SK-N-SH (cell line): ENCODE measurements at regions of chr1 and their contacts with region 1.

Region 1: GRCh38 chr1:30085811-30086770 is 637.3 kb downstream of the MATN1 start:
- DNase-seq: peak; percentile 93
- H3K4me3 ChIP-seq: peak overlapping the region; percentile 39 to 58
- H3K27ac ChIP-seq: peak overlapping the region in 1 of 2 experiments; percentile 31; a peak in 1 of 4 replicates
- H3K4me1 ChIP-seq: peaks cover 35 to 46% of the 10 kb centered on the region in 2 experiments; a peak in 3 of 4 replicates
- H3K27me3 ChIP-seq: no peaks in the 10 kb centered on the region
- CTCF ChIP-seq: peak; percentile 87
- EP300 ChIP-seq: no peak
- RAD21 ChIP-seq: peak; percentile 77

Region 2: DNA sequence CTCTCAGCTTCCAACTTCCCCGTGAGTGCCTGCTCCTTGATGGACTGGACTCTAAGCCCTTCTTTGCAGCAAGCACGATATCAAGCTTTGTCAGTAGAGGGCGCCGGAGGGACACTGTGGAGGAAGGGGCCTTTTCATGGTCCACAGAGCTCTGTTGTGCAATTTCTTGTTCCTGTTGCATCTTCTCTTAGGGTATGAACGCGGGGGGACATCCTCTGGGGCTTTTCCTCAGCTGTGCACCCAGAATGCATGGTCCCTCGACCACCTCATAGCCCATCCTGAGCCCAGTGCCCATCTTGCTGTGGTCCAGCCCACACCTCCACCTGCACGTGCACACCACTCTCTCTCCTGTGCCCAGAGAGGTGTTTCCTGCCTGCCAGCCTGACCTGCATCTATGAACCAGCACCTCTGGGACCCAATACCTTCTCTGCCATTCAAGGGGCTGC is 293.0 kb before region 1 on chr1:
- CTCF ChIA-PET with region 1: interaction called, 33 read pairs
- POLR2A ChIA-PET with region 1: no interaction called
- DNase-seq: peak; percentile 74
- H3K4me3 ChIP-seq: no peak overlapping the region; a peak in 1 of 4 replicates
- H3K27ac ChIP-seq: no peak overlapping the region
- H3K4me1 ChIP-seq: peaks cover 0 to 12% of the 10 kb centered on the region in 2 experiments; a peak in 1 of 4 replicates
- H3K27me3 ChIP-seq: no peaks in the 10 kb centered on the region
- CTCF ChIP-seq: peak; percentile 78
- EP300 ChIP-seq: no peak
- RAD21 ChIP-seq: peak; percentile 96

Region 3: GRCh38 chr1:29856340-29857114 is 229.6 kb before region 1 on chr1:
- CTCF ChIA-PET with region 1: interaction called, 10 read pairs
- POLR2A ChIA-PET with region 1: no interaction called
- DNase-seq: peak; percentile 32
- H3K4me3 ChIP-seq: no peak overlapping the region
- H3K27ac ChIP-seq: no peak overlapping the region
- H3K4me1 ChIP-seq: peaks cover 2% of the 10 kb centered on the region in 2 experiments; a peak in 2 of 4 replicates
- H3K27me3 ChIP-seq: no peaks in the 10 kb centered on the region
- CTCF ChIP-seq: no peak
- EP300 ChIP-seq: no peak
- RAD21 ChIP-seq: no peak

Region 4: GRCh38 chr1:30106125-30106524 is 20.0 kb after region 1 on chr1:
- CTCF ChIA-PET with region 1: interaction called, 47 read pairs
- POLR2A ChIA-PET with region 1: interaction called, 3 read pairs
- DNase-seq: peak; percentile 76
- H3K4me3 ChIP-seq: peak overlapping the region in 1 of 2 experiments; percentile 35; a peak in 1 of 4 replicates
- H3K27ac ChIP-seq: no peak overlapping the region
- H3K4me1 ChIP-seq: peaks cover 0 to 23% of the 10 kb centered on the region in 2 experiments; a peak in 3 of 4 replicates
- H3K27me3 ChIP-seq: no peaks in the 10 kb centered on the region
- CTCF ChIP-seq: peak; percentile 54
- EP300 ChIP-seq: no peak
- RAD21 ChIP-seq: peak; percentile 50

Region 5: DNA sequence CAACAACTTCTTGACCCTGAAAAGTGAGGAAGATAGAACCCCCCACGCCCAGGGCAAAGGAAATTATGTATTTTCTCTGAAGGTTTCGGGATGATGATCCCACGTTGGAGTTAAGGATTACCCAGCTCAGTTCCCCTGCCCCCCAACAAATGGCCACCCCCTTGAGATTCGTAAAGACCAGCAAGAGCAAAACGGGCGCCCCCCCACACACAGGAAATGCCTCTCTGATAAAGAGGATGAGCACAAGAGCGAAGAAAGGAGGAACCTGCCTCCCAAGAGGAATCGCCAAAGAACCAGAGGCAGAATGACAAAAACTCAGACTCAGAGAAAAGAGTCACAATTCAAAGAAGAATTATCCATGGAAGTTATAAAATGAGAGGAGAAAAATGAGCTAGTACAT is 60.4 kb after region 1 on chr1:
- CTCF ChIA-PET with region 1: no interaction called
- POLR2A ChIA-PET with region 1: no interaction called
- DNase-seq: no peak
- H3K4me3 ChIP-seq: no peak overlapping the region
- H3K27ac ChIP-seq: no peak overlapping the region
- H3K4me1 ChIP-seq: no peaks in the 10 kb centered on the region
- H3K27me3 ChIP-seq: no peaks in the 10 kb centered on the region
- CTCF ChIP-seq: no peak
- EP300 ChIP-seq: no peak
- RAD21 ChIP-seq: no peak

Region 6: GRCh38 chr1:30191154-30191702 is 105.1 kb after region 1 on chr1:
- CTCF ChIA-PET with region 1: no interaction called
- POLR2A ChIA-PET with region 1: no interaction called
- DNase-seq: peak; percentile 34
- H3K4me3 ChIP-seq: no peak overlapping the region
- H3K27ac ChIP-seq: no peak overlapping the region
- H3K4me1 ChIP-seq: peaks cover 0 to 15% of the 10 kb centered on the region in 2 experiments; a peak in 1 of 4 replicates
- H3K27me3 ChIP-seq: no peaks in the 10 kb centered on the region
- CTCF ChIP-seq: no peak
- EP300 ChIP-seq: no peak
- RAD21 ChIP-seq: no peak